Naive thymus-derived CD4-positive, alpha-beta T cell (primary cell): ENCODE measurements at regions of chr17 and their contacts with region 1.

Region 1: DNA sequence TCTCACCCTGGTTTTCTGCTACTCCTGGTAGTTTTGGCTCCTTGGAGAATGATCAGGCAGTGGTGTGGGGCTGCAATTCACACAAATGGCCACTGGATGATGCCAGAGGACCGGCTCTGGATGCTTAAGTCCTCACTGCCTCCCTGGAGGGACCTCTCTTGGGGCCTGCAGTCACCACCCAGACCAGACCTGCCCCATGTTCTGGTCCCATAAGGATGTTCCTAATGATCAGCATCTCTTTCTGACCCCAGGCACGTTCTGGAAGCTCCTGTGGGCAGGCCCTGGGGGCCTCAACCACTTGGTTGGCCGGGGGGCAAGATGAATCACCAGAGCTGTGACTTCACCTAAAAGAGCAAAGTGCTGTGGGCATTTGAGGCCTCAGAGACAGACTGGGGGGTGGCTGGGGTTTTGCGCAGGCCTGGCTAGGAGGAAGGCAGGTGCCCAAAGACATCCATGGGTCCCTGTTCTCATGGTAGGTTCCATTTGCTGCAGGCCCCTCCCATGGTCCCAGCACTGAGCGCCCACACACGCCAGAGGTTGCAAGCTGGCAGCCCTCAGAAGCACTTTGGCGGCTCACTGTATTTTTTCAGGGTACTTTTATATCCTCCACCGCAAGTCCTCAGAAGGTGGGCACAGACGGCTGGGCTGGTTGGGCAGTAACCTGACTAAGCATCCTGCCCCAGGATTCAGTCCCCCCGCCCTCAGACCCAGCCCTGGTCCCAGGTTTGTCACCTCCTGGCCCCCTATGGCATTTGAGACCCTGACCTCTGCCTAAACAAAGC is 53.2 kb downstream of the NT5M start:
- DNase-seq: peak; percentile 46 to 73 (median 61)
- ATAC-seq: peak; percentile 85
- H3K4me3 ChIP-seq: no peak overlapping the region
- H3K4me3 Mint-ChIP-seq: no peak overlapping the region
- H3K27ac ChIP-seq: no peak overlapping the region
- H3K27ac Mint-ChIP-seq: no peak overlapping the region
- H3K4me1 ChIP-seq: peaks cover 0 to 5% of the 10 kb centered on the region in 2 donors
- H3K4me1 Mint-ChIP-seq: peaks cover 0 to 7% (median 4%) of the 10 kb centered on the region in 7 donors
- H3K27me3 ChIP-seq: no peaks in the 10 kb centered on the region
- H3K27me3 Mint-ChIP-seq: peaks cover 0 to 22% (median 0%) of the 10 kb centered on the region in 5 donors

Region 2: DNA sequence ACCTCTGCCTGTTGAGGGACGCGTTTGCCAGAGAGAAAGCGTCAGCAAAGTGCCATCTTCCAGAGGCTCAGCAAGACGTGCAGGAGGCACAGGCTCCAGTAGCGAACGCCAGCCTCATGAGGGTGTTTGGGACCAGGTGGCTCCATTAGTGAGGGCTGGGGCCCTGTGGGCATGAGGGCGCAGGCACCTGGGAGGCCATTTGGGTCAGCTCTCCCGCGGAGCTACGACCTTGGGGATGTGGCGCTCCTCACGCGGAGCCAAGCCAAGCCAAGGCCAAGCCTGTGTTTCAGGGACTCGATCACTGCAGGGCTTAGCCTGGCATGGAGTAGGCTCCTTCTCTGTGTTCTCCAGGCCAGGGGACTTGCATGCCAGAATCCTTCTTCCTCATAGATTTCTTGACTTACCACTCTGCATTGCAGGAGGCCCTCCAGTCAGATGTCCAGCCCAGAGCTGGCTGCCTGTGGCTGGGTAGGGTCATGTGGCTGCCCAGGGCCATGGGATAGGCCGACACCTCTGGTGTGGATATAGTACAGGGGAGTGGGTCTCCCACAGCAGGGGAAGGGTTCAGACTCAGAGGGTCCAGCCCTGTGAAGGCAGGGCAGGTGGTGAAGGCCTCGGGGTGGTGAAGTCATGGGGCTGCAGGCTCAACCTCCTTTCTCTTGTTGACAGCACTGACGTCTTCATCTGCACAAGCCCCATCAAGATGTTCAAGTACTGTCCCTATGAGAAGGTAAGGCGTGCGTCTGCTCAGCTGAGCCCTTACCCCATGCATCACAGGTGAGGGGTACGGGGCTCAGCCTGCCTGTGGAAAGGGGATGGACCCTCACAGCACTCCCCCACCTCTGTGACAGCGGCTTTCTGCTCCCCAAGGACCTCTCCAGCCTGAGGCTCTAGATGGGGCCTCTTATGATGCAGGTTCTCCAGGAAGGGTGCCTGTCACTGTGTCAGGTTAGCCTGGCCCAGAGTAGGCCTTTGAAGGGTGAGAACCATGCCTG is 33.5 kb before region 1 on chr17:
- CTCF ChIA-PET with region 1: no interaction called
- POLR2A ChIA-PET with region 1: no interaction called
- intact Hi-C with region 1: no loop called
- DNase-seq: no peak
- ATAC-seq: no peak
- H3K4me3 ChIP-seq: no peak overlapping the region
- H3K4me3 Mint-ChIP-seq: no peak overlapping the region
- H3K27ac ChIP-seq: no peak overlapping the region
- H3K27ac Mint-ChIP-seq: no peak overlapping the region
- H3K4me1 ChIP-seq: no peaks in the 10 kb centered on the region
- H3K4me1 Mint-ChIP-seq: no peaks in the 10 kb centered on the region
- H3K27me3 ChIP-seq: no peaks in the 10 kb centered on the region
- H3K27me3 Mint-ChIP-seq: no peaks in the 10 kb centered on the region

Region 3: GRCh38 chr17:17440010-17440843 is 83.9 kb after region 1 on chr17:
- CTCF ChIA-PET with region 1: interaction called, 15 read pairs
- POLR2A ChIA-PET with region 1: no interaction called
- intact Hi-C with region 1: loop called (anchors 1 kb)
- DNase-seq: peak; percentile 49 to 79 (median 63)
- ATAC-seq: peak; percentile 79
- H3K4me3 ChIP-seq: no peak overlapping the region
- H3K4me3 Mint-ChIP-seq: no peak overlapping the region
- H3K27ac ChIP-seq: no peak overlapping the region
- H3K27ac Mint-ChIP-seq: peak overlapping the region in 2 of 9 donors; percentile 56 to 76
- H3K4me1 ChIP-seq: no peaks in the 10 kb centered on the region
- H3K4me1 Mint-ChIP-seq: peaks cover 0 to 9% (median 7%) of the 10 kb centered on the region in 7 donors
- H3K27me3 ChIP-seq: no peaks in the 10 kb centered on the region
- H3K27me3 Mint-ChIP-seq: no peaks in the 10 kb centered on the region

Region 4: DNA sequence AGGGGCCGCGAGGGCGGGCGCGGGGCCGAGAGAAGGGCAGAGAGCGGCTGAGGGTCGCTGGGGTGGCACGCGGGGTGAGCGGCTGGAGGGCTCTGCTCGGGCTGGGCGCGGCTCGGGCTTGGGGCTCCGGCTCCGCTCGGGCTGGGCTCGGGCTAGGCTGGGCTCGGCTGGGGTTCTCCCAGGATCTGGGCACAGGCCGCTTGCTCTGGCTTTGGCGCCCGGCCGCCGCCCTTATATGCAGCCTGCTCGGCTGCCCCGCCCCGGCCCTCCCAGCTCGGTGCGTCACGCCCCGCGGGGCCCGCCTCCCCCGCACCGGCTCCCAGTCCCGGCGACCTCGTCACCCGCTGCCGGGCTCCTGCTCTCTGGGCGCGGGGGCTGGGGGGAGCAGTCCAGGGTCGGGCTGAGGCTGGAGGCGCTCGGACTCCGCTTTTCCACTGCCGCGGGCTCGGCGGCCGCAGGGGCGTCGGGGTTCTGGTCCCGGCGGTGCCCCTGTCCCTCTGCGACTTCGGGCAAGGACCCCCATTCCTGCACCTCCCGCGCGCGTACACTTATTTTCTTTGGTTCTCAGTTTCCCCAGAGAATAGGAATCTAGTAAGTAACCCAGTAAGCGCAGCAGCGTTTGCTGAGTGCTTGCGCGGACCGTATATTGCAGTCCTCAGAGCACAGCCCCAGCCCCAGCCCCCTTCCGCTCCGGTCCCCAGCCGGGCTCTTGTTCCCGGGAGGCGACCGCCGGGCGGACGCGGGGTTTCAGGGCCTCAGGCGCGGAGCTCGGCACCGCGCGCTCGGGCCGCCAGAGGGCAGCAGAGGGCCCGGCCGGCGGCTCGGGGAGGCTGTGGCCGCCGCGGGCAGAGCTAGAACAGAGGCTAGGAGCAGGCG is 140.1 kb after region 1 on chr17 and contains the start of gene RASD1:
- CTCF ChIA-PET with region 1: interaction called, 17 read pairs
- POLR2A ChIA-PET with region 1: no interaction called
- intact Hi-C with region 1: loop called (anchors 1 kb)
- DNase-seq: peak; percentile 61 to 89 (median 74)
- ATAC-seq: peak; percentile 90
- H3K4me3 ChIP-seq: peak within 1 kb of the TSS; percentile 61
- H3K4me3 Mint-ChIP-seq: peak within 1 kb of the TSS; percentile 77 to 91 (median 86)
- H3K27ac ChIP-seq: peak within 1 kb of the TSS; percentile 44
- H3K27ac Mint-ChIP-seq: peak within 1 kb of the TSS in 5 of 9 donors; percentile 29 to 86 (median 42)
- H3K4me1 ChIP-seq: peaks cover 3 to 11% of the 10 kb centered on the region in 2 donors
- H3K4me1 Mint-ChIP-seq: peaks cover 12 to 20% (median 14%) of the 10 kb centered on the region in 7 donors
- H3K27me3 ChIP-seq: no peaks in the 10 kb centered on the region
- H3K27me3 Mint-ChIP-seq: peaks cover 5 to 24% (median 6%) of the 10 kb centered on the region in 5 donors
- total RNA-seq, gene RASD1: 0.35 to 2.5 (median 1.0) TPM

Region 5: GRCh38 chr17:17568749-17569195 is 212.4 kb after region 1 on chr17:
- CTCF ChIA-PET with region 1: interaction called, 3 read pairs
- POLR2A ChIA-PET with region 1: no interaction called
- intact Hi-C with region 1: loop called (anchors 2 kb)
- DNase-seq: peak in 7 of 9 donors; percentile 15 to 73 (median 29)
- ATAC-seq: no peak
- H3K4me3 ChIP-seq: no peak overlapping the region
- H3K4me3 Mint-ChIP-seq: no peak overlapping the region
- H3K27ac ChIP-seq: no peak overlapping the region
- H3K27ac Mint-ChIP-seq: peak overlapping the region in 1 of 9 donors; percentile 19
- H3K4me1 ChIP-seq: no peaks in the 10 kb centered on the region
- H3K4me1 Mint-ChIP-seq: peaks cover 0 to 7% (median 0%) of the 10 kb centered on the region in 7 donors
- H3K27me3 ChIP-seq: no peaks in the 10 kb centered on the region
- H3K27me3 Mint-ChIP-seq: no peaks in the 10 kb centered on the region

Region 6: DNA sequence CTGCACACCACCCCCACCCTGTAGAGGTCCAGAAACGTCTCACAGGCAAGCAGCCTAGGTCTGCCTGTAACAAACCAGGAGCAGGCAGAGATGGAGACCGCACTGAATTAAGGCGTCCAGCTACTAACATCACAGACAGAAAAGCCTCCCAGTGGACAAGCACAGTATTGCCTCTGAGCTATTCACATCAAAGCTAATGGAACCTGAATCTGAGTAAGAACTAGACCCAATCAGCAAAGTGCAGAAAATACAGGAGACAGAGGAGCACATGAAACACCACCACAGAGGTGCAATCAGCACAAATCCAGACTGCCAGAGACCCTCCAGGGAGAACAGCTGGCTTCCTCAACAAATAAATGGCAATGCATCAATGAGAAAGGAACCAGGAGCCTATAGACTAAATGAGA is 257.4 kb after region 1 on chr17:
- CTCF ChIA-PET with region 1: interaction called, 9 read pairs
- POLR2A ChIA-PET with region 1: no interaction called
- intact Hi-C with region 1: loop called in 1 of 2 experiments (anchors 1 kb)
- DNase-seq: peak in 8 of 9 donors; percentile 15 to 54 (median 42)
- ATAC-seq: peak; percentile 89
- H3K4me3 ChIP-seq: no peak overlapping the region
- H3K4me3 Mint-ChIP-seq: no peak overlapping the region
- H3K27ac ChIP-seq: no peak overlapping the region
- H3K27ac Mint-ChIP-seq: peak overlapping the region in 1 of 9 donors; percentile 82
- H3K4me1 ChIP-seq: no peaks in the 10 kb centered on the region
- H3K4me1 Mint-ChIP-seq: peaks cover 0 to 6% (median 2%) of the 10 kb centered on the region in 7 donors
- H3K27me3 ChIP-seq: no peaks in the 10 kb centered on the region
- H3K27me3 Mint-ChIP-seq: no peaks in the 10 kb centered on the region

Region 7: DNA sequence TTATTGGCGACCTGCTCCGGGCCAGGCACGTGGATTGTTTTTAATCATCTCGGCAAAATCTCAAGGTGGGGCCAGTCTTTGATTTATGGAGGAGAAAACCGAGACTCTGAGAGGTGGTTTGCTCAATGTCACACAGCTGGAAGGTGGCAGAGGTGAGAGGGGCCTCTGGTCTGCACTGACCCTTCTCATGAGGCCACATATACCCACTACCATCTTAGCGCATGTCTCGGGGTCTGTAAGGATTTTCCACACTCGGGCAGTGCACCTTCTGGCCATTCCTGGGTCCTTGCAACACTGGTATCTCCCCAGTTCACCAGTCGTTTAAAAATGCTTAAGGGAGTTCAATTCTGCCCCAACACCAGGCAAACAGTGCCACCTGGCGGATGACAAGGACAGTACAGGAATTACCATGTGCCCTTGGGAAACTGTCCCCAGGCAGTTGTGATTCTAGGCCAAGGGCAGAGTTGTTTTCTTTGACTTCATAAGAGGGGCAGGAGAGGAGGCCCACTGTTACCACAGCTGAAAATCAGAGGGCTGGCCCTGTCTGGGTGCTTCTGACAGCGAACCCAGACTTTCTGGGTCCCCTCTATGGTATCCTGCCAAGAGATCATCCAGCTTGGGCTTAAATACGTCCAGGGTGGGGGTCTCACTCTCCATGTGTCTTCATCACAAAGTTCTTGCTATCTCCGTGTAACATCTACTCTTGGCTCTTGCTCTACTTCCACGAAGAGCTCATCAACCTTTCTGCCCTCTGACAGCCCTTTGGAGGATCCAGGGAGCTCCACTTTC is 285.5 kb after region 1 on chr17:
- CTCF ChIA-PET with region 1: interaction called, 59 read pairs
- POLR2A ChIA-PET with region 1: no interaction called
- intact Hi-C with region 1: loop called (anchors 1 kb)
- DNase-seq: peak; percentile 49 to 84 (median 72)
- ATAC-seq: peak; percentile 91
- H3K4me3 ChIP-seq: no peak overlapping the region
- H3K4me3 Mint-ChIP-seq: no peak overlapping the region
- H3K27ac ChIP-seq: no peak overlapping the region
- H3K27ac Mint-ChIP-seq: peak overlapping the region in 1 of 9 donors; percentile 65
- H3K4me1 ChIP-seq: no peaks in the 10 kb centered on the region
- H3K4me1 Mint-ChIP-seq: peaks cover 0 to 5% (median 0%) of the 10 kb centered on the region in 7 donors
- H3K27me3 ChIP-seq: no peaks in the 10 kb centered on the region
- H3K27me3 Mint-ChIP-seq: peaks cover 0 to 2% (median 0%) of the 10 kb centered on the region in 5 donors

Region 8: DNA sequence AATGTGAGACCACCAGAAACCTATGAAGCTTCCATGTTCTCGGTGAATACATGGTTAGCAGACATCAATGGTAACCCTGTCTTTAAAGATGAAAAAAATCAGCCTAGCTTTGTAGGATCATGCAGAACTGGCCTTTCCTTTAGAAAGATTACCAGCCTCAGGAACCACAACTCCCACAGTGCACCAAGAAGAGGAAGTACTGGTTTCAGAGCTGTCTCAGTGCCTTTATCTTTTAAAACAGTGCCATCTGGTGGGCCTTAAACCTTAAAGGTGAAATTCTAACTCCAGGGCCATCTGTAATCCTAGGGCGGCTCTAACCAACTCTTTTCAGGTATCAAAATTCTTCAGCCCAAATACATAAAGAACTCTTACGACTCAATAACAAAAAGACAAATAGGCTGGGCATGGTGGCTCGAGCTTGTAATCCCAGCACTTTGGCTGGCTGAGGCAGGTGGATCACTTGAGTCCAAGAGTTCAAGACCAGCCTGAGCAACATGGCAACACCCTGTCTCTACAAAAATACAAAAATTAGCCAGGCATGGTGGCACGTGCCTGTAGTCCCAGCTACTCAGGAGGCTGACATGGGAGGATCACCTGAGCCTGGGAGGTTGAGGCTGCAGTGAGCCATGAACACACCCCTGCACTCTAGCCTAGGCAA is 677.2 kb after region 1 on chr17:
- CTCF ChIA-PET with region 1: no interaction called
- POLR2A ChIA-PET with region 1: no interaction called
- intact Hi-C with region 1: loop called in 1 of 2 experiments (anchors 1 kb)
- DNase-seq: peak in 8 of 9 donors; percentile 37 to 81 (median 70)
- ATAC-seq: peak; percentile 98
- H3K4me3 ChIP-seq: no peak overlapping the region
- H3K4me3 Mint-ChIP-seq: no peak overlapping the region
- H3K27ac ChIP-seq: no peak overlapping the region
- H3K27ac Mint-ChIP-seq: peak overlapping the region in 4 of 9 donors; percentile 3 to 79 (median 42)
- H3K4me1 ChIP-seq: peaks cover 17 to 21% of the 10 kb centered on the region in 2 donors
- H3K4me1 Mint-ChIP-seq: peaks cover 19 to 42% (median 31%) of the 10 kb centered on the region in 7 donors
- H3K27me3 ChIP-seq: no peaks in the 10 kb centered on the region
- H3K27me3 Mint-ChIP-seq: no peaks in the 10 kb centered on the region